Dendritic cell treated with granulocyte-macrophage colony-stimulating factor and Interleukin-4, amounts not matched to agents 40 ng/mL and 50 ng/mL, for 4 days (primary cell): ENCODE measurements at regions of chr2 and their contacts with region 1.

Region 1: DNA sequence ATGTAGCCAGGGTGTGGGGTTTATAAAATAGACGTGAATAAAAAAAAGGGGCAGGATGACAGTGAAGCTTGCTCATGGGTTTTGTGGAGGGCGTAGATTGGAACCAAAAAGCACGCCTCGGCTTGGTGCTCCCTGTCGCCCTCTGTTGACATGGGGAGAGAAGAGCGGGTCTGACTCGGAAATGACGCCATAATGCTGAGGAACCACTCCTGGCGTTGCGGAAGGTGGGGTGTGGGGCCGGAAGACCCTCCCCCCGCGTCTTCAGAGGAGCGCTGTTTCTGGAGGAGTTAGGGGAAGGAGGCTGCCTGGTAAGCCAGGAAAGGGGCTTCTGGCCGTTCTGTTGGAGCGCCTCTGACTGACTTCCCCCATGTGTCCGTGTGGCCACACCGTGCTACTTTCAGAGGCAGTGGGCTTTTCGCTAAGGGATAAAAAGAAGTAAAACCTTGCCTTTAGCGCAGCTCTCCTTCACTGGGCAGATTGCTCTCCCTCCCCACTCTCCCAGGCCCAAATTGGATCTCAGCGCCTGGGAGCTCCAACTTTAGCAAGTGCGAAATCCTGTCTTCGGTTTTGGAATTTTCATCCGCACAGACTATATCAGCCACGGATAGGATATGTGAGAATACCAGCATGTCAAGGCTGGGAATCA is 42.8 kb downstream of the PLEKHA3 start:
- H3K4me3 Mint-ChIP-seq: peak overlapping the region; percentile 84
- H3K27ac Mint-ChIP-seq: peak overlapping the region; percentile 86
- H3K4me1 Mint-ChIP-seq: peaks cover 25% of the 10 kb centered on the region
- H3K27me3 Mint-ChIP-seq: no peaks in the 10 kb centered on the region

Region 2: DNA sequence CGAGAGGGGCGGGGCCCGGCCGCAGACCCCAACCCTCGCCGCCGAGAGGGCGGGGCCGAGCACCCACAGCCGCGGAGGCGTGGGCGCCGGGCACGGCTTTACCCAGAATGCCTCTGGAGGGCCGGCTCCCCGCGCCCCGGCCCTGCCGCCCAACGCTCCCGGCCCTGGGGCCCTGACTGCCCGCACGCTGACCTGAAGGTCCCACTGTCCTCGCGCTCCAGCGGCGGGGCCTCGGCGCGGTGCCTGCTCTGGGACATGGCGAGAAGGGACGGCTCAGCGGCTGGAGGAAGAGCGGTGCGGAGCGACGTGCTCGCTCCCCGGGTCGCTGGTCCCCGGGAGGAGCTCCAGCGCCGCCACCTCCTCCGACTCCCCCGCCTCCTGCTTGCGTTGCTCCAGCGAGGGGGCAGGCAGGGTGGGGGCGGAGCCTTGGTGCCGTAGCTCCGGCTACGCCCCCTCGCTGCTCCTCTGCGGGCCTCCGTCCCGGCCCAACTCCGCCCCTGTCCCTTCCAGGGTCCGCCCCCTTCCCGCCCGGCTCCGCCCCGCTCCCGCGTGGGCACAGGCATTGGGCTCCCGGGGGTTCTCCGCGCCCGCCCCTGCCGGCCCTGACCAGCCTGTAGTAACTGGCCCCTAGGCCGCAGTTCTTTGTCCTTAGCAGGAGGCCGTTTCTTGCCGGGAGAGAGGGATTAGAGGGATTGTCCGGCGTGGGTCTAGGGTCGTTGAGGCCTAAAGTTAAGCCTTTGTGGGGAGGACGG is 72.1 kb before region 1 on chr2 and contains the starts of genes PJVK and PRKRA:
- intact Hi-C with region 1: loop called (anchors 2 kb)
- H3K4me3 Mint-ChIP-seq: peak within 1 kb of the TSS; percentile 88
- H3K27ac Mint-ChIP-seq: peak within 1 kb of the TSS; percentile 98
- H3K4me1 Mint-ChIP-seq: peaks cover 26% of the 10 kb centered on the region
- H3K27me3 Mint-ChIP-seq: peaks cover 3% of the 10 kb centered on the region

Region 3: DNA sequence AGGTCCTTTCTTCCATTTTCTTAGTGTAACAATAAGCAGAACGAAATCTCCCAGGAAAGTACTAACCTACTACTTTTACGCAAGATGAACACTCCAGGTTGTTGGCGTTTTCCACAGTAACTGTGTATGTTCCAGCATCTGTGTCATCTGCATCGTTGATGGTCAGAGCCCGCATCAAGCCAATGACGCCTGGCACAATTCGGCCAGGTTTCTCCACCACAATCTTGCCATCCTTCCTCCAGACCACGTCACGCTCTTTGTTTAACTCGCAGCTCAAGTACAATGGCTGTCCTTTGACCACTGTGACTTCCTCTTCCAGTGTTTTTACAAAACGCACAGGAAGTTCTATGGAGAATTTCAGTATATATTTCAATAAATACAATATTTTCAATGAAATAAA is 112.8 kb after region 1 on chr2:
- intact Hi-C with region 1: no loop called
- H3K4me3 Mint-ChIP-seq: no peak overlapping the region
- H3K27ac Mint-ChIP-seq: no peak overlapping the region
- H3K4me1 Mint-ChIP-seq: no peaks in the 10 kb centered on the region
- H3K27me3 Mint-ChIP-seq: no peaks in the 10 kb centered on the region